ENCODE measurements at regions of chr11 and their contacts with region 1.

Region 1: GRCh38 chr11:59668950-59669610 is at the start of gene PATL1:
- DNase-seq: peak; percentile 100
- ATAC-seq: peak; percentile 99
- H3K4me3 ChIP-seq: peak within 1 kb of the TSS; percentile 83 to 91
- H3K27ac ChIP-seq: peak within 1 kb of the TSS; percentile 62 to 96
- H3K4me1 ChIP-seq: no peaks in the 10 kb centered on the region
- H3K27me3 ChIP-seq: no peaks in the 10 kb centered on the region
- total RNA-seq, gene PATL1: 23.7 to 29.6 TPM

Region 2: DNA sequence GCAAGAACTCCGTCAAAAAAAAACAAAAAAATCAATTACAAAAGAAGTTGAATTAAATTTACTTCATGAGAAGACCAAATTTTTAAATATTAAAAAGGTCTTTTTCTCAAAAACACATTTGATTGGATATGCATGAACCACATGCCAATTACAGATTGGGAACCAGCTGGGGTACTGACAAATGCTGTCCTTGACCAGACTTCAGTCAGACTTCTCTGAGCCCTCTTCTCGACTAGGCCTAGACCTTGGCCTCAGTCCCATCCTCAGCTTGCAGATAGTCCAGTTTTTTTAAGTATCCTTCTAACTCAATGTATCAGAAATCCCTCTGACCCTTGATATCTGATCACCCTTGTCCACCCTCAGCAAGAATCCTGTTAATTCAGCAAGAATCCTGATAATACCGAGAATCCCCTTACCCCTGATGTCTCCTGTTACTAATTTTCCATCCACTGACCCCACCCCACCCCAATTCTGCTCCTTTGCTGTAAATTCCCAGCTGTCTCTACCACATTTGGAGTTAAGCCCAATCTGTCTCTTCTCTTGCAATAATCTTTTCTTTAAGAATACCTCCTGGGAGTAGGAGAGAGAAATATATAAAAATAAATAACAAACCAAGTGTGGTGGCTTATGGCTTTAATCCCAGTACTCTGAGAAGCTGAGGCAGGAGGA is 126.8 kb before region 1 on chr11:
- intact Hi-C with region 1: loop called in 1 of 2 experiments (anchors 1 kb)
- DNase-seq: no peak
- ATAC-seq: no peak
- H3K4me3 ChIP-seq: no peak overlapping the region
- H3K27ac ChIP-seq: no peak overlapping the region
- H3K4me1 ChIP-seq: no peaks in the 10 kb centered on the region
- H3K27me3 ChIP-seq: no peaks in the 10 kb centered on the region

Region 3: GRCh38 chr11:59560702-59561469 is 108.2 kb before region 1 on chr11:
- intact Hi-C with region 1: loop called in 1 of 2 experiments (anchors 5 kb)
- DNase-seq: peak; percentile 92 to 95
- ATAC-seq: peak; percentile 92
- H3K4me3 ChIP-seq: peak overlapping the region; percentile 85 to 91
- H3K27ac ChIP-seq: peak overlapping the region; percentile 72 to 83
- H3K4me1 ChIP-seq: no peaks in the 10 kb centered on the region
- H3K27me3 ChIP-seq: no peaks in the 10 kb centered on the region

Region 4: GRCh38 chr11:59615637-59616395 is 53.3 kb before region 1 on chr11 and contains the start of gene OSBP:
- intact Hi-C with region 1: loop called in 1 of 2 experiments (anchors 1 kb)
- DNase-seq: peak; percentile 99 to 100
- ATAC-seq: peak; percentile 97
- H3K4me3 ChIP-seq: peak within 1 kb of the TSS; percentile 58 to 68
- H3K27ac ChIP-seq: peak within 1 kb of the TSS; percentile 89 to 93
- H3K4me1 ChIP-seq: peaks cover 1 to 3% of the 10 kb centered on the region in 2 donors
- H3K27me3 ChIP-seq: no peaks in the 10 kb centered on the region
- total RNA-seq, gene OSBP: 40.4 to 42.4 TPM

Region 5: DNA sequence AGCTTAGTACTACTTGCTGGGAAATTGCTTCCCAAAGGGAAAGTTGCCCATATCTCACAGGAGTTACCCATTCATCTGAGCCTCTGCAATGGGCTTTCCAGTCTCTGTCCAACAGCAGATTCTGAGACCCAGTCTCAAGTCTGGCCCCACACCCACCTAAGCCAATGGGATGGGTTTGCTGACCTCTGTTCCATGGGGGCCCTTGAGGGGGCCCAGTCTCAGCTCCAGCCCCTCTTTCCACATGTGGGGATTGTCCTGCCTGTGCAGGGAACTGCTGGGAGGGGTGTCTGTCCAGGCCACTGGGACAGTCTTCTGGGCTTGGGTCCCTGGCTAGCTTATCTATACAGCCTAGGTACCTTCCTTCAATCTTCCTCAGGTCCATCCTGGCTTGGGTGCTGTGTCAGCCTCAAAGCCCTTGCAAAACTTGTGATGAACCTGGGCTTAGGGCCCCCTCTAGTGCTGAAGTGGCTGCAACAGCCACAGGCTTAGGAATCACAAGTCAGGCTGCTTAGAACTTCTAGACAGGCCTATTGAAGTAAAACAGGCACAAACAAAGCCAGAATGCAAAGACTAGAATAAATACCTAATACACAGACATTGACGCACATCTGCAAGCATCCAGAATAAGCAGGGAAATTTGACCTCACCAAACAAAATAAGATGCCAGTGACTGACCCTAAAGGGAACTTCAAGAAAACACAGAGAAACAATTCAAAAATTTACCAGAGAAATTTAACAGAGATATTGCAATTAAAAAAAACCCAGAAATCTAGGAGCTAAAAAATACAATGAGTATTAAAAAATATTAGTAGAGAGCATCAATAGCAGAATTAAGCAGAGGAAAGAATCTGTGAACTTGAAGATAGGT is 11.4 kb after region 1 on chr11:
- intact Hi-C with region 1: no loop called
- DNase-seq: peak in 1 of 2 donors; percentile 75
- ATAC-seq: peak; percentile 82
- H3K4me3 ChIP-seq: no peak overlapping the region
- H3K27ac ChIP-seq: no peak overlapping the region
- H3K4me1 ChIP-seq: no peaks in the 10 kb centered on the region
- H3K27me3 ChIP-seq: no peaks in the 10 kb centered on the region

Region 6: DNA sequence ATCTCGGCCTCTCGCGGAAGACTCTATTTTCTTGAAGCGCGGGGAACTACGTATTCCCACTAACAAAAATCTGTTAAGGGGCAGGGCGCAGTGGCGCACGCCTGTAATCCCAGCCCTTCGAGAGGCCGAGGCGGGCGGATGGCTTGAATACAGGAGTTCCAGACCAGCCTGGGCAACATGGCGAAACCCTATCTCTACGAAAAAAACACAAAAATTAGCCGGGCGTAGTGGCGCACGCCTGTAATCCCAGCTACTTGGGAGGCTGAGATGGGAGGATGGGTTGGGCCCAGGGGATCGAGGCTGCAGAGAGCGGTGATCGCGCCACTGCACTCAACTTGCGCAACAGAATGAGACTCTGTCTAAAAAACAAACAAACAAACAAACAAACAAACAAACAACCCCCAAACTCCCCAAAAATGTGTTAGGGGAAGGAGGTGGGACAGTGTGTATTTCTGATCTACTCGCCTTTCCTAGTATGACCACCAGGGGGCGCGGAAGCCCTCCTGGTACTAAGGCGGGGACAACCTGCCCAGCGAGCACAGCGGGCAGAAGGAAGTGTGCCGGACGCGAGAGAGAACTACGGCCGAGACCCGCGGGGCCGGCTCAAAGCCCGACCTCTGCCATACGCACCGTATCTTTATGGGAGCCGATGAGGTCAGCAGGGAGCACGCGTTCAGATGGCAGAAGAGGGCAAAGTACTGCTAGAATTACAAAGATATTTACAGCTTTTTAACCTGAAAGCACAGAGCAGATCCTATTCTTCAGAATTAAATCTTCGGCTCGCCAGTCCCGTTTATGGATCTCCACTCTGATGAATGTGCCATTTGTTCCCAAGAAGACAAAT is 84.8 kb after region 1 on chr11:
- intact Hi-C with region 1: loop called in 1 of 2 experiments (anchors 2 kb)
- DNase-seq: peak; percentile 91 to 95
- ATAC-seq: peak; percentile 93
- H3K4me3 ChIP-seq: peak overlapping the region; percentile 91 to 95
- H3K27ac ChIP-seq: no peak overlapping the region
- H3K4me1 ChIP-seq: peaks cover 0 to 2% of the 10 kb centered on the region in 2 donors
- H3K27me3 ChIP-seq: no peaks in the 10 kb centered on the region

Region 7: GRCh38 chr11:59802639-59803176 is 133.6 kb after region 1 on chr11:
- intact Hi-C with region 1: loop called in 1 of 2 experiments (anchors 10 kb)
- DNase-seq: no peak
- ATAC-seq: peak; percentile 88
- H3K4me3 ChIP-seq: no peak overlapping the region
- H3K27ac ChIP-seq: no peak overlapping the region
- H3K4me1 ChIP-seq: no peaks in the 10 kb centered on the region
- H3K27me3 ChIP-seq: no peaks in the 10 kb centered on the region